ENCODE measurements at regions of chr15 and their contacts with region 1.

Region 1: GRCh38 chr15:75928680-75929608 is 25.3 kb downstream of the FBXO22 start:
- DNase-seq: peak; percentile 10
- ATAC-seq: peak; percentile 78
- H3K4me3 ChIP-seq: no peak overlapping the region
- H3K27ac ChIP-seq: no peak overlapping the region
- H3K4me1 ChIP-seq: no peaks in the 10 kb centered on the region
- H3K27me3 ChIP-seq: no peaks in the 10 kb centered on the region
- CTCF ChIP-seq: peak; percentile 26 to 55 (median 41); a peak in 4 of 6 replicates
- POLR2A ChIP-seq: no peak
- RAD21 ChIP-seq: peak; percentile 37; the same call in 1 of the 2 replicates

Region 2: DNA sequence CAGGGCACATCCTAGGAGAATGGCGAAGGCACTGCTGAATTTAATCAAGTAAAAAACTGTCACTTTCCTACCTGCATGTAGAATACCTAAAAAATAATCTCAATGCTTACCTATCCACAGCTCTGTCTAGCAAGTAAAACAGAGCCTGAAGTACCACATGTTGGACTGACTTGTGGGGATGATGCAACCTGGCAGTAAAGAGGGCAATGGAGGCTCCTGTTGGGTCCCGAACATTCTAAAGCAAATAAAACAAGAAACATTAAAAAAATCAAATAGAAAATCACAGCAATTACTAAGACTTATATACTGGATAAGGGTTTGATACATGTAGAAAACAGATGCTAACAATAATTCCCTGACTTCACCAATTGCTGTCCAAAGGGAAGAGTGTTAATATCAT is 405.9 kb before region 1 on chr15:
- CTCF ChIA-PET with region 1: no interaction called
- POLR2A ChIA-PET with region 1: no interaction called
- RAD21 ChIA-PET with region 1: no interaction called
- intact Hi-C with region 1: no loop called
- DNase-seq: no peak
- ATAC-seq: no peak
- H3K4me3 ChIP-seq: no peak overlapping the region
- H3K27ac ChIP-seq: no peak overlapping the region
- H3K4me1 ChIP-seq: peaks cover 0 to 4% of the 10 kb centered on the region in 2 experiments; a peak in 1 of 4 replicates
- H3K27me3 ChIP-seq: no peaks in the 10 kb centered on the region
- CTCF ChIP-seq: no peak
- POLR2A ChIP-seq: no peak
- RAD21 ChIP-seq: no peak

Region 3: DNA sequence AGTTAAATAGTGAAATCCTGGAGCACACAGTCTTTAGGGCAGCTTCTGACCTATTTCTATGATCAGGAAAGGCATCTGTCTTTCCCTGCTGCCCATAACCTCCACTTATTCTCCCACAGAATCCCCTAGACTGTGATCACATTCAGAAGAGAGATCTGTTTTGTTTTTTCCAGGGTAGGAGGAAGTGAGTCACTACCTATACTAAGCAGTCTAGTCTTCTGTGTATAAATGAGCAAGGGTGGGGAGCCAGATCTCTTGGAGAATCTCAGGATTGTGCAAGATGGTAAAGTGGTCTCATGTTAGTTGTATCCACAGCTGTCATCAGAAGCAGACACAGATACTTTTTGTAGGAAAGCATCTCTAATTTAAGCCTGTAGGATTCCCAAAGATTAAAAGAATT is 37.0 kb before region 1 on chr15:
- CTCF ChIA-PET with region 1: no interaction called
- POLR2A ChIA-PET with region 1: no interaction called
- RAD21 ChIA-PET with region 1: no interaction called
- intact Hi-C with region 1: no loop called
- DNase-seq: no peak
- ATAC-seq: no peak; the same call in 1 of the 2 replicates
- H3K4me3 ChIP-seq: no peak overlapping the region
- H3K27ac ChIP-seq: no peak overlapping the region
- H3K4me1 ChIP-seq: peaks cover 0 to 8% of the 10 kb centered on the region in 2 experiments; a peak in 2 of 4 replicates
- H3K27me3 ChIP-seq: no peaks in the 10 kb centered on the region
- CTCF ChIP-seq: no peak
- POLR2A ChIP-seq: no peak
- RAD21 ChIP-seq: no peak

Region 4: DNA sequence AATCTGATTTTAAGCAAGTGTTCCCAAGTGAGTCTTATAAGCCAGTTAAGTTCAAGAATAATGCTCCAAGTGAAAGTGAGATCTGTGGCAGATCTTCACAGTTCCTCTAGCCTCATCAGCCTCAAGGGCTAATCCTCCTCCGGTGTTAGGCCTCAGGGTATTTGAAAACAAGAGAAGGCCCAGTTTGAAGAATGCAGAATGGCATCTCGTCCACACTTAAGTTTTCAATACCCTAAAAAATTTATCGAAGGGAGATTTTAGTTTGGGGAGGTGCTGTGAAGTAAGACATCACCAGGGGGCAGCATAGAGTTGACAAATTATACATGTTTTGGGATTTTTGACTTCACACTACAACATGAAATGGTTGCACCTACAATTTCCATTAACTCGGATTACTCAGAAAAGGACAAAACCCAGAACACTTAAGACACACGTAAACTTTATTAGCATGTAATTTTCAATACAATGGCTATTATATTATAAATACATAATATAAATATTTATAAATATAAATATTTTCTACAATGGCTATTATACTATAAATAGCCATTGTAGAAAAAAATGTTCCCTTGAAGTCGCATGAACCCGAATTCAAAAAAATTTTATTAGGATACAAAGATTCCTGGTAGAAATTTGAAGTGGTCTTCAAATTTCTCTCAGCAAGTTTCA is 128.5 kb after region 1 on chr15:
- CTCF ChIA-PET with region 1: interaction called, 10 read pairs
- POLR2A ChIA-PET with region 1: no interaction called
- RAD21 ChIA-PET with region 1: no interaction called
- intact Hi-C with region 1: no loop called
- DNase-seq: no peak
- ATAC-seq: peak; percentile 37; the same call in 1 of the 2 replicates
- H3K4me3 ChIP-seq: peak overlapping the region; percentile 29 to 54
- H3K27ac ChIP-seq: no peak overlapping the region
- H3K4me1 ChIP-seq: peaks cover 9 to 30% of the 10 kb centered on the region in 2 experiments
- H3K27me3 ChIP-seq: peaks cover 13% of the 10 kb centered on the region
- CTCF ChIP-seq: peak; percentile 69 to 75 (median 73)
- POLR2A ChIP-seq: no peak
- RAD21 ChIP-seq: peak; percentile 61

Measured in HCT116 (cell line).